PC-9 (cell line): ENCODE measurements at regions of chr9 and their contacts with region 1.

Region 1: DNA sequence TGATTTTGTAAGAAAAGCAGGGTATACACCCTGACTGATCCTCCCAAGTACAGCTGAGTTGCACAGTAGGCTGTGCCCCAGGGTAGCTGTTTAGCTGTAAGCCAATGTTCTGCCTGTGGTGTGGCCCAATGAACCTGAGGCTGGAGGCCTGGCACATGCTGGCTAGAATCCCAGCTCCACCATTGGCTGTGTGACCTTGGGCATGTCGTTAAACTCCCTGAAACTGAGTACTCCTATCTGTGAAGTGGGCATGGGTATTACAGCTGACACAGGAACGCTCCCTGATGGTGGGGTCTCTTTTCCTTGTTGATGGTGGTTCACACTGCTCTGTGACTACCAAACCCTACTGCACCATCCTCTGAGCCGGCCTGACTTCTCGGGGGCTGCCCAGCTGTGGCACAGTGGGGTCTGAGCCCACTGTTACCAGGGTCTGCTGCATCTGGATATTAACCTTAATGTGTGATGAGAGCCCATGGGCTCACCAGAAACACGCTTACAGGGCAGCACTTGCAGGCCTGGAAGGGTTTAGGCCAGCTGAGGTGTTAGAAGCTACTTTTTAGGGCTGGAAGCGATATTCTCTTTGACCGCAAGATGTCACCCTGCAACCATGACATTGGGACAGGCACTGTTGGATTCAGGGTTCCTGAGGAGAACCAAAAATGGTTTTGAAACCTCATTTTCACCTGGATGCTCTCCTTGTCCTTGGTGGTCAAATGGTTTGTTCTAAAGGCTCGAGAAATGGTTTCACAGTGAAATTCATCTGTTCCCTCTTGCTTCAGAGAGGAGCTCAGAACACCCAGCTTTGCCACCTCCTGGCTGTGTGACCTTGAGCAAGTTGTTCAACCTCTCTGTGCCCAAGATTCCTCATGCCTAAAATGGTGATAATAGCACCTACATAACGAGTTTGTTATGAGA is 6.8 kb upstream of the GADD45G start:
- DNase-seq: peak in 1 of 2 experiments; percentile 57
- H3K4me3 ChIP-seq: no peak overlapping the region
- H3K27ac ChIP-seq: no peak overlapping the region
- H3K4me1 ChIP-seq: no peaks in the 10 kb centered on the region
- H3K27me3 ChIP-seq: peaks cover 91% of the 10 kb centered on the region
- CTCF ChIP-seq: peak; percentile 80

Region 2: DNA sequence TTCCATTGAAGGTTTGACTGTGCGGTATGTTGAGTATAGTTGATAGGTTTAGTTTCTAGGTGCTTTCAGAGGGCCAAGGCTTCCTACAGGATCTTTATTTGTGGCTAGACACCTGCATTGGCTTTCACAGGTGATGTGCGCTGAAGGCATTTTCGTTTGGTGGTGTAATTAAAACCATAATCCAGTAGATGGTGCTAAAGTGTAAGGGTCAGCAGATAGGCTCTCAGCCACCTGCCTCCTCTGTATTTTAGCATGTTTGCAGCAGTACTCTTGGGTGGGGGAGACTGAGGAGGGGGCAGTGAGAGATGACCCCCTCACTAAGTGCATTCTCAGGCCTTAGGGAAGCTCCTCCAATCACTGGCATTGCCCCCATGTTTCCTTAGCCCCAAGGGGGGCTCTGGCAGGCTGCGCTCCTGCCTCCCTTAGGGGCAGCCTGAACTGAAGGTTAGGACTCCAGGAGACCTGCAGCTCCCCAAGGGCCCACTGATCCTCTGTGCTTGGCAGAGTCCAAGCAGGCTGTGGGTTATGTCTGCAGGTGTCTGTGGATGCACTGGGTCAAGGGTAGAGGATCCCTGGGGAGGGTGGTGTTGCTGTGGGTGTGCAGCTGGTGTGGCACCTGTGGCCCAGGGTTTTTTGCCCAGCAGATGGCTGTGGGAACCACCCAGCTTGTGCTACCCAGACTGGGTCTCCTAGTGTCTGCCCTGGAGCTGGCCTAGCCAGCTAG is 1647.0 kb before region 1 on chr9:
- CTCF ChIA-PET with region 1: no interaction called
- POLR2A ChIA-PET with region 1: no interaction called
- intact Hi-C with region 1: loop called (anchors 5 kb)
- DNase-seq: no peak
- H3K4me3 ChIP-seq: no peak overlapping the region
- H3K27ac ChIP-seq: no peak overlapping the region
- H3K4me1 ChIP-seq: no peaks in the 10 kb centered on the region
- H3K27me3 ChIP-seq: no peaks in the 10 kb centered on the region
- CTCF ChIP-seq: peak; percentile 81

Region 3: DNA sequence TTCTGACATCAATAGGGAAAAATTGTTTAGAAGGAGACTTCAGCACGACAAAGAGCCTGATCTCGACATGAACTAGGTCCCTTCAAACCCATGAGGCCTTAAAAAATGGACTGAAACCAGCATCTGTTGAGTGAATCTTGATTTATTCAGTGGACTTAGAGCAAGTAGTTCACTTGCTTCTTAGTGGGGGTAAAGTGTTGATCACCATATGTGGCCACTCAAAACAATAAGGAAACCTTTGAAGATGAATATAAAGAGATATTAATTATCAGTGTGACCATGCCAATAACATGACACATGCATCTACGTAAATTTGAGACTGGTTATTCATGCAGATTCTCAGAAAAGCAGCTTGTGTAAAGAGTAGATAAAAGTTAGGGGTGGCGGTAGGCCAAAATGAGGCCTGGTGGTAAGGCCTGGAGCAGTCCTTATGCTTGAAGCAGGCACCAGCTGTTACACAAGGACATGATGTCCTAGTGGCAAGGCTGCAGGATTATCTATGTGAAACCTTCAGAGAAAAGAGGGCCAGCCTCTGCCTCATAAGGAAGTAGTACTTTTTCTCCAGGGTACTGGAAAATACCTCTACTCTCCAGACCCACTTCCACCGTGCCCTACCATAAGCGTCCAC is 545.4 kb before region 1 on chr9:
- CTCF ChIA-PET with region 1: no interaction called
- POLR2A ChIA-PET with region 1: no interaction called
- intact Hi-C with region 1: no loop called
- DNase-seq: no peak
- H3K4me3 ChIP-seq: no peak overlapping the region
- H3K27ac ChIP-seq: no peak overlapping the region
- H3K4me1 ChIP-seq: no peaks in the 10 kb centered on the region
- H3K27me3 ChIP-seq: no peaks in the 10 kb centered on the region
- CTCF ChIP-seq: no peak

Region 4: GRCh38 chr9:90102292-90102901 is 504.4 kb after region 1 on chr9:
- CTCF ChIA-PET with region 1: interaction called, 12 read pairs
- POLR2A ChIA-PET with region 1: no interaction called
- intact Hi-C with region 1: loop called (anchors 1 kb)
- DNase-seq: peak; percentile 71 to 75
- H3K4me3 ChIP-seq: no peak overlapping the region
- H3K27ac ChIP-seq: no peak overlapping the region
- H3K4me1 ChIP-seq: no peaks in the 10 kb centered on the region
- H3K27me3 ChIP-seq: peaks cover 58% of the 10 kb centered on the region
- CTCF ChIP-seq: peak; percentile 72

Region 5: DNA sequence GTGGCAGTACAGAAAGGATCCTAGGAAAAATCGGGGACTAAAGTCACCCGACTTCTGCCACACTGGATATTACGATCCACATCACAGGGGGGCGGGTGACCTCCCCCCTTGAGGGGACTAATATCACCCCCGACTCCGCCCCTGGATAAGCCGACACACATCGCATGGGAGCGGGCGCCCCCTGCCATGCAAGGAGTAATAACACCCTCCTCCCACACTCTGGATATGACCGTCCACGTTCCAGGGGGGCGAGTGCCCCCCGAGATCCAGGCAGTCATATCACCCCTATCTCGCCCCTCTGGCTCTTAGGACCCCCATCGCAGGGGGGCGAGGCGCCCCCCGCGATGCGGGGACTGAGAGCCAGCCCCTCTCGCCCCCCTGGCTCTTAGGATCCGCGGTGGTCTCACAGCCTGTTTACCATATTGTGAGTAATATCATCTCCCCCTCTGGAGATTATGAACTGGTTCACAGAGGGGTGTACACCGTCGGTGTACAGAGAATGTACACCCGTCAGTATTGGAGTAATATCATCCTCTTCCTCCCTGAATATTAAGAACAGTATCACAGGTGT is 621.7 kb after region 1 on chr9:
- CTCF ChIA-PET with region 1: no interaction called
- POLR2A ChIA-PET with region 1: no interaction called
- intact Hi-C with region 1: loop called (anchors 2 kb)
- DNase-seq: peak in 1 of 2 experiments; percentile 8
- H3K4me3 ChIP-seq: no peak overlapping the region
- H3K27ac ChIP-seq: no peak overlapping the region
- H3K4me1 ChIP-seq: no peaks in the 10 kb centered on the region
- H3K27me3 ChIP-seq: peaks cover 4% of the 10 kb centered on the region; the same call in 1 of the 2 replicates
- CTCF ChIP-seq: peak; percentile 52; the same call in 1 of the 2 replicates

Region 6: DNA sequence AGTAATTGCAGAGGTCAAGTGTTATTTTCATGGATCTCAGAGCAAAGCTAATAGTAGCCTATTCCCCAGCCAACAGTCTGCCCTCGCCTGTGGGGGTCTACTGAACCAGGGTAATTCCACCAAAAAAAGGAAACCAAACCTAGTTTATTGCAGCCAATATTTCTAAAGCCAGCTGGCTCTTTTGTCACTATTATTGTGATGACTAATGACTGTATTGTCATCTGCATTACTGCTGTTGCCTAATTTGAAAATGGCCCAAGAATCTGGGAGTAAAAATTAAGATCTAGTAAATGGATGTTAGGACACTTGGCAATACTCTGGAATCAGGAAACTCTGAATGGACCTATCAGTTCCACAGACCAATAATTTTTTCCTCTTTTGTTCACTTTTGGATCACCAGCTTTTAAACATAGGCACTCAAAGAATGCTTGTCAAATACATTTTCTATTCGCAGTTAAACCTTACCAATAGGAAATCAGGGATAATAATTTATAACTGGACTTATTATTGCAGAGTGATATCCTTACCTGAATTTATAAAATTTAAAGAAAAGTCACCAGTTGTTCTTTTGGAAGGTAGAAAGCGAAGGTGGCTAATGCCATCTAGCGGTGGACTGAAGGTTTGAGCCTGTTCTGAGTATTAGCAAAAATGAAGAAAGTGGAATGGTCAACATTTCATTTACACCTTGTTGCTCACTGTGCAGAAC is 1272.8 kb after region 1 on chr9:
- CTCF ChIA-PET with region 1: interaction called, 8 read pairs
- POLR2A ChIA-PET with region 1: no interaction called
- intact Hi-C with region 1: loop called (anchors 2 kb)
- DNase-seq: peak in 1 of 2 experiments; percentile 32
- H3K4me3 ChIP-seq: no peak overlapping the region
- H3K27ac ChIP-seq: no peak overlapping the region
- H3K4me1 ChIP-seq: 0 out of 2 replicates have a peak, but pooled peaks cover 5% of the 10 kb centered on the region
- H3K27me3 ChIP-seq: no peaks in the 10 kb centered on the region
- CTCF ChIP-seq: peak; percentile 92